Left colon (tissue), 2 donors: ENCODE measurements at regions of chr4 and their contacts with region 1.

Region 1: GRCh38 chr4:88818631-88819470 is 121.2 kb upstream of the NAP1L5 start:
- DNase-seq: peak; percentile 51 to 61
- ATAC-seq: peak; percentile 36

Region 2: GRCh38 chr4:88690355-88690754 is 128.5 kb before region 1 on chr4:
- intact Hi-C with region 1: no loop called
- DNase-seq: no peak
- ATAC-seq: no peak

Region 3: GRCh38 chr4:88706574-88706973 is 112.3 kb before region 1 on chr4:
- intact Hi-C with region 1: loop called in 1 of 2 experiments (anchors 5 kb)
- DNase-seq: no peak
- ATAC-seq: no peak

Region 4: DNA sequence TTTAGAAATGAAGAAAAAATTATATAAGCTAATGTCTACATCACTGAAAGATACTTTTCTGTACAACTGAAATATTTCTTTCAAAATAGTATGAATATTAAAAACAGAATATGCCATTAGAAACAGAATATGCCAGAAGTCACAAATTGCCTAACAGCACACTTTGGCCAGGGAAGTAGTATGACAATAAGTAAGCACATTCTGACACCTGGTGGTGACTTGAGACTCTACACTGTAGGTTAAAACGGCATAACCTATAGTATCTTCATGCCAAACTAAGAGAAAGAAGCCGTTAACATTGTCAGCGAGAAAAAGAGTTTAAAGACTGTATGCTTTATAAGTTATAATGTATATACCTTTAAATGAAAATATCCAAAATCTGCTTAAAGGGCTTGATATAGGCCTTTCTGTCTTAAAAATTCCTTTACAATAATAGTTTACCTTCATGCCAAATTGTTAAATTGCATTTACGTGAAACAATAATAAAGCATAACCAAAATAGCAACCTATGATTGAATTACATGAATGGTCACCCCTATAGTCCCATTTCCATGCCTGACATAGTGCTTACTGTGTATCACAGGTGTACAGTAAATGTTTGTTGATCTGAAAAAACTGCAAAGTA is 205.3 kb after region 1 on chr4:
- intact Hi-C with region 1: loop called (anchors 5 to 10 kb)
- DNase-seq: peak; percentile 41 to 57
- ATAC-seq: peak; percentile 97

Region 5: DNA sequence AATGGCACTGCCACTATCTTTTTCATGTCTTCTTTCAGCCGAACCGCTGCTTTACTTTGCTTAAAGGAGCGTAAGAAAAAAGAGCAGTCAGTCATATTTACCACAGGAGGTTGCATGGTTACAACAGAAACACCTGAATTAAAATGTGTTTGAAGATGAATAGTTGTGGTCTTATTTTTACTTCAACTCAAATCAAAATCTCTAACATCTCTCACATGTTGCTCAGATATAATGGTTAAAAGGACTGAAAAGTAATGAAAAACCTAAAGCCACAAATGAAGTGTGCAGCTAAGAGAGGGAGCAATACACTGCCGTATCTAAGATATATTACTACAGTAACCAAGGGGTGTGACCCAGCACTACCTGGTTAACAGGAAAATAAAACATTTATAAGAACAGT is 210.7 kb after region 1 on chr4:
- intact Hi-C with region 1: loop called (anchors 5 to 10 kb)
- DNase-seq: no peak
- ATAC-seq: peak; percentile 96

Region 6: GRCh38 chr4:89109841-89110540 is 291.1 kb after region 1 on chr4:
- intact Hi-C with region 1: loop called in 1 of 2 experiments (anchors 5 kb)
- DNase-seq: no peak
- ATAC-seq: no peak